ENCODE measurements at regions of chr7 and their contacts with region 1.

Region 1: GRCh38 chr7:5694912-5695726 is 86.3 kb downstream of the RNF216 start:
- DNase-seq: peak; percentile 87
- ATAC-seq: peak; percentile 78
- H3K4me3 Mint-ChIP-seq: peak overlapping the region; percentile 84
- H3K27ac Mint-ChIP-seq: peak overlapping the region; percentile 96
- H3K4me1 Mint-ChIP-seq: peaks cover 98% of the 10 kb centered on the region
- H3K27me3 Mint-ChIP-seq: no peaks in the 10 kb centered on the region

Region 2: GRCh38 chr7:4762121-4763055 is 932.7 kb before region 1 on chr7:
- CTCF ChIA-PET with region 1: no interaction called
- POLR2A ChIA-PET with region 1: no interaction called
- intact Hi-C with region 1: no loop called
- DNase-seq: no peak
- ATAC-seq: no peak
- H3K4me3 Mint-ChIP-seq: peak overlapping the region; percentile 19
- H3K27ac Mint-ChIP-seq: no peak overlapping the region
- H3K4me1 Mint-ChIP-seq: no peaks in the 10 kb centered on the region
- H3K27me3 Mint-ChIP-seq: no peaks in the 10 kb centered on the region

Region 3: GRCh38 chr7:5396999-5397663 is 298.0 kb before region 1 on chr7:
- CTCF ChIA-PET with region 1: no interaction called
- POLR2A ChIA-PET with region 1: interaction called, 3 read pairs
- intact Hi-C with region 1: loop called (anchors 2 to 10 kb)
- DNase-seq: peak; percentile 94
- ATAC-seq: peak; percentile 93
- H3K4me3 Mint-ChIP-seq: peak overlapping the region; percentile 66
- H3K27ac Mint-ChIP-seq: peak overlapping the region; percentile 87
- H3K4me1 Mint-ChIP-seq: peaks cover 25% of the 10 kb centered on the region
- H3K27me3 Mint-ChIP-seq: no peaks in the 10 kb centered on the region

Region 4: GRCh38 chr7:5477723-5478531 is 217.2 kb before region 1 on chr7:
- CTCF ChIA-PET with region 1: no interaction called
- POLR2A ChIA-PET with region 1: no interaction called
- intact Hi-C with region 1: no loop called
- DNase-seq: no peak
- ATAC-seq: peak; percentile 49
- H3K4me3 Mint-ChIP-seq: no peak overlapping the region
- H3K27ac Mint-ChIP-seq: no peak overlapping the region
- H3K4me1 Mint-ChIP-seq: no peaks in the 10 kb centered on the region
- H3K27me3 Mint-ChIP-seq: no peaks in the 10 kb centered on the region

Region 5: GRCh38 chr7:5629941-5630340 is 65.2 kb before region 1 on chr7:
- CTCF ChIA-PET with region 1: no interaction called
- POLR2A ChIA-PET with region 1: interaction called, 3 read pairs
- intact Hi-C with region 1: loop called in 1 of 2 experiments (anchors 2 kb)
- DNase-seq: peak; percentile 79
- ATAC-seq: peak; percentile 84
- H3K4me3 Mint-ChIP-seq: no peak overlapping the region
- H3K27ac Mint-ChIP-seq: peak overlapping the region; percentile 75
- H3K4me1 Mint-ChIP-seq: peaks cover 29% of the 10 kb centered on the region
- H3K27me3 Mint-ChIP-seq: no peaks in the 10 kb centered on the region

Region 6: DNA sequence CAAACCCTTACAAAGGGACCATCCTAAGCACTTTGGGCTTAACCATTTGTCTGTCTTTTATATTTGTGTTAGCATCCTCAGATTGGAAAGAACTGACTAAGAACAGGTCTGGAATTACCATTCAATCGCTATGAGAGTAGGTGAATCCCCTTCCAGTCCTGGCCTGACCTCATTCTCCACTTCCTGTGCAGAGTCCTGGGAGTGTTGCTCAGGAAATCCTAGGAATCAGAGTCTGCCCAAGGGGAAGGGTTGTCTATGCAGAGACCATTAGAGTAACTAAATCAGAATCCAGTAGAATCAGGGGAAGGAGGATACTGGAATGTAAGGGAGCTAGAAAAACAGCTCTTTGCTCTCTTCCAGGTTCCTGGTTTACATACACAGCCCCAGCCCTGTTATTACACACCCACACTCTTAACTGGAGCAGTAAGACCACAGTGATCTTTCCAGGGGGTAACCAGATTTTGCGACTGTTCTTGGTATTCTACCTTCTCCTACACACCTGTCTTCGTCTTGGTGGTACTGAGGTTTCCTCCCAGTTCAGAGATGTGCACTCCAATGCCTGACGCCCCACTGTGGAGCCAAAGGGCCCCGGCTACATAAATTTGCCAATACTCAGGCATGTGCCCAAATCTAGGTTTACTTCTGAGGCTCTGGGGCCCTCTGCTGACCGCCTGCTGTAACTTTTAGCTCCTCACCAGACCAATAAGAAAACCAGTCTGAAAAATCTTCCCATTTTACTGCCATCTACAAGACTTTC is 17.4 kb before region 1 on chr7:
- CTCF ChIA-PET with region 1: interaction called, 27 read pairs
- POLR2A ChIA-PET with region 1: interaction called, 3 read pairs
- intact Hi-C with region 1: no loop called
- DNase-seq: peak; percentile 73
- ATAC-seq: peak; percentile 63
- H3K4me3 Mint-ChIP-seq: no peak overlapping the region
- H3K27ac Mint-ChIP-seq: peak overlapping the region; percentile 27
- H3K4me1 Mint-ChIP-seq: peaks cover 44% of the 10 kb centered on the region
- H3K27me3 Mint-ChIP-seq: no peaks in the 10 kb centered on the region

Region 7: DNA sequence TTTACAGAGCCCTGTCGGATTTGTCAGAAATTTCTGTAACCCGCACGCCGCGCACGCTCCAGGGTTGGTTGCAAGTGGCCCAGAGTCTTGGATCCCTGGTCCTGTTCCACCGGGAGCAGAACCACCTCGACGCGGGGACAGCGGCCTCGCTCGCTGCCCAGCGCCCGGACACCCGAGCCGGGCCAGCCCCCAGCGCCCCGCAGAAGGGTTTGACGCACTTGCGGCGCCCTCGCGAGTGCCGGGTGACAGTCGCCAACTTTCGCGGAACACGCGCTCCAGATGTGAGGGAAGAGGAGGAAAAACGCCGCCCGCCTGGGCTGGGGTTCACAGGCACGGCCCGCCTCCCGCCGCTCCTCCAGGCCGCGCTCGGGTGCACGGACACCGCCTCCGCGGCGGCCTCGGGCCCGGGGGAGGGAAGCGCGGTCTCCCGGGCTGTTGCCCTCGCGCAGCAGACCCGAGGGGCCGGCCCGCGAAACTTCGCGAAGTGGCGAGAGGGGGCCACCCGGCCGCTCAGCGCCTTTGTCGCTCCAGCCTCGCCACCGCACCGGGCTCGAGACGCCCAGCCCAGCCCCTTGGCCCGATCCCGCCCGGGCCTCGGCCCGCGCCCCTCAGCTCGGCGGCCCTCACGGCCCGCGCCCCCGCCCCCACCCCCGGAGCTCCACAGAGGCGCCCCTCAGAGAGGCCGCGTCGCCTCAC is 85.8 kb after region 1 on chr7:
- CTCF ChIA-PET with region 1: interaction called, 3 read pairs
- POLR2A ChIA-PET with region 1: no interaction called
- intact Hi-C with region 1: loop called in 1 of 2 experiments (anchors 2 kb)
- DNase-seq: peak; percentile 61
- ATAC-seq: peak; percentile 19
- H3K4me3 Mint-ChIP-seq: peak overlapping the region; percentile 78
- H3K27ac Mint-ChIP-seq: peak overlapping the region; percentile 80
- H3K4me1 Mint-ChIP-seq: peaks cover 45% of the 10 kb centered on the region
- H3K27me3 Mint-ChIP-seq: no peaks in the 10 kb centered on the region